Cardiac septum (tissue), 1 donor: ENCODE measurements at regions of chr4 and their contacts with region 1.

Region 1: DNA sequence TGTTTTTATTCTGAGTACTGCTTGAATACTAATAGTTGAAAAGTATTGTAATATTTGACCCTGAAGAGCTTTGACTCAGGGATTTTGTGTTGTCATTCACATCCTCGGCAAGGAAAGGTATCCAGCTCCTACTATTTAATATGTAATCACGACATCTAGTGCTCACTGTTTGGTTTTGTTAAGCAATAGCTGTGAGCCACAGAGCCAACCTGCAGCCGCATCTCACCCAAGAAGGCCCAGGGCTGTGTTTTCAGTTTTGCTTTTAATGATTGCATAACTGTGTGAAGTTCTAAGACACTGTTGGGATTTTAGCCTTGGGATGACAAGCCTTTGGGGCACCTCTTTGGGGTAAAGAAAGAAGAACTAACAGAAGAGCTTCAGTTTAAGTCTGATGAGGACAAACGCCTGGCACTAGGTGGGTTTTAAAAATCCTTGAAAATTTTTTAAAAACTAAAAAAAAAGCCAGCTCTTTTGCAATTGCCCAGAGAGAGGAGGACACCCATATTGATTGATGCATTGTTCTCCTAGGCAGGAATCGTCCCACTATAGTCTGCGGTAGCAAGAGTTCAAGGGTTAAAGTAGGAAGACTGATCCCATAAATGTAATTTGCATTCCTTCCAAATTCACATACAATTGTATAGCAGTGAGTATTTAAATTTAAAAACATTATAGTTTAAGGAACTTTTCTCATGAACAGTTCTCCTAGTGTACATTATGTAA is 157.8 kb downstream of the RELL1 start:
- DNase-seq: no peak

Region 2: GRCh38 chr4:37503261-37503660 is 25.1 kb before region 1 on chr4:
- intact Hi-C with region 1: loop called (anchors 2 kb)
- DNase-seq: no peak